Sigmoid colon (tissue), 7 donors: ENCODE measurements at regions of chr2 and their contacts with region 1.

Region 1: GRCh38 chr2:74440378-74441169 is 1.2 kb downstream of the RTKN start:
- DNase-seq: peak; percentile 95
- H3K4me3 ChIP-seq: peak overlapping the region; percentile 49 to 67 (median 54)
- H3K27ac ChIP-seq: peak overlapping the region; percentile 77 to 87 (median 84)
- H3K4me1 ChIP-seq: peaks cover 0 to 57% (median 43%) of the 10 kb centered on the region in 4 donors
- H3K27me3 ChIP-seq: peaks cover 6 to 27% (median 6%) of the 10 kb centered on the region in 3 donors
- CTCF ChIP-seq: peak; percentile 40 to 54 (median 45)
- EP300 ChIP-seq: no peak
- POLR2A ChIP-seq: peak in 1 of 2 donors; percentile 42

Region 2: DNA sequence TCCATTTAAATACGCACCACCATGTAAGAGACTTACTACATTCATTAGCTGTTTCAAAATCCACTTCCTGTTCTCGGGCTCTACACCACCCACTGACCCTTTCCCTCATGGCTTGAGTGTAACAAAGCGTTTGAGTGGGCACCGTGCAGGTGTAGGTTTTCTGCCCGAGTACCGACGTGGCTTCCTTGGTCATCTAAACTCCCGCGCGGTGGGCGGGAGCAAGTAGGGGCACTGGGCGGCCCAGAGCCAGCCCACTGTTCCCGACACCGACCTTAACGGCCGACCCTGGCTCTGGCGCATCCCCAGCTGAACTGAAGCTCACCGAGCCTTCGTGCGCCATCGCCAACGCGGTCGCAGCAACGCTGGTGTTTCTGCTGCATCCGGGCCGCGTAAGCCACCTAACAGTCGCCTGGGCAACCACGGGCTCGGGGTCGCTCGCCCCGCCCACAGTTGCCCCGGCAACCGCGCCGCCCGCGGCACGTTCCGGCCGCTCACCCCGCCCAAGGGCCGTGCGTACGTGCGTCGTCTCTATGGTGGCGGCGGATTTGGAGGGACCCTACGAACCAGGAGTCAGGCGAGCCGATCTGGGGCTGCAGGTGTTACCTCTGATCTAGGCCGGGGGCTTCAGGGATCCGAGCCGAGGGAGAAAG is 19.2 kb before region 1 on chr2 and contains the starts of genes C2orf81 and WDR54:
- intact Hi-C with region 1: loop called (anchors 2 kb)
- DNase-seq: peak; percentile 92
- H3K4me3 ChIP-seq: peak within 1 kb of the TSS; percentile 63 to 71 (median 69)
- H3K27ac ChIP-seq: peak within 1 kb of the TSS; percentile 69 to 77 (median 74)
- H3K4me1 ChIP-seq: peaks cover 0 to 19% (median 10%) of the 10 kb centered on the region in 4 donors
- H3K27me3 ChIP-seq: no peaks in the 10 kb centered on the region
- CTCF ChIP-seq: no peak
- EP300 ChIP-seq: no peak
- POLR2A ChIP-seq: peak in 1 of 2 donors; percentile 17
- total RNA-seq, gene C2orf81: 1.4 to 2.2 (median 2.0) TPM in 3 of 4 donors, not detected in the other
- total RNA-seq, gene WDR54: 7.5 to 13.3 (median 9.8) TPM

Region 3: DNA sequence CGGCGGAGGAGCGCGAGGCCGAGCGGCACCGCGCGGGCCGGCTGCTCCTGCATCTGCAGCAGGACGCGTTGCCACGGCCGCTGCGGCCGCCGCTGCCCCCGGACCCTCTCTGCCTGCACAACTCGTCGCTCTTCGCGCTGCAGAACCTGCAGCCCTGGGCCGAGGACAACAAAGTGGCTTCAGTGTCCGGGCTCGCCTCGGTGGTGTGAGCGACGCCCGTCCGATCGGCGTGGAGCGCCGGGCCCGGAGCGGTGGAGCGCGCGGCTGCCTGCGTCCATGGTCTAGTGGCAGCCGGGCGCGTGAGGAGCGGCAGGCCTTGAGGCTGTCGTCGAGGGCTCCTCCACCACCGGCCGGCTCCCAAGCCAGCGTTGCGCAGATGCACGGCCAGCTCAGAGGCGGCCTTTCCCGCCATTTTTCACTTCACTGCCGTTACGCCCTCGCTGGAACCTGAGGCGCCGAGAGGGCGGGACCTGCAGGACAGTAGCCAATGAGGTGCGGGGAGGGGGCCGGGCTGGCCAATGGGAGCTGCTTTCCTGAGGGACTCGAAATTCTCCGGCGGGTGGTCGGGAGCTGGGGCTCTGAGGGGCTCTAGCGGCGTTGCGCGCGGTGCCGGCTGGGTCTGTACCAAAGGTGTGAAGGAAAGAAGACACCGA is 75.5 kb after region 1 on chr2:
- intact Hi-C with region 1: no loop called
- DNase-seq: peak; percentile 75
- H3K4me3 ChIP-seq: peak overlapping the region in 3 of 4 donors; percentile 25 to 40 (median 26)
- H3K27ac ChIP-seq: no peak overlapping the region
- H3K4me1 ChIP-seq: peaks cover 0 to 36% (median 29%) of the 10 kb centered on the region in 4 donors
- H3K27me3 ChIP-seq: peaks cover 51 to 100% (median 86%) of the 10 kb centered on the region in 3 donors
- CTCF ChIP-seq: no peak
- EP300 ChIP-seq: no peak
- POLR2A ChIP-seq: no peak